ENCODE measurements at regions of chrX and their contacts with region 1.

Region 1: GRCh38 chrX:72572248-72573157 is at the start of gene HDAC8:
- DNase-seq: peak in 8 of 9 experiments; percentile 10 to 76 (median 46)
- ATAC-seq: peak; percentile 88
- H3K4me3 ChIP-seq: peak within 1 kb of the TSS; percentile 82 to 96
- H3K4me3 Mint-ChIP-seq: peak within 1 kb of the TSS; percentile 96
- H3K27ac ChIP-seq: peak within 1 kb of the TSS; percentile 41 to 69
- H3K27ac Mint-ChIP-seq: peak within 1 kb of the TSS; percentile 88
- H3K4me1 ChIP-seq: no peaks in the 10 kb centered on the region
- H3K4me1 Mint-ChIP-seq: peaks cover 11% of the 10 kb centered on the region
- H3K27me3 ChIP-seq: no peaks in the 10 kb centered on the region
- H3K27me3 Mint-ChIP-seq: no peaks in the 10 kb centered on the region
- CTCF ChIP-seq: no peak
- total RNA-seq, gene HDAC8: 5.7 to 6.8 TPM

Region 2: GRCh38 chrX:72269671-72270251 is 302.7 kb before region 1 on chrX:
- CTCF ChIA-PET with region 1: no interaction called
- POLR2A ChIA-PET with region 1: no interaction called
- intact Hi-C with region 1: loop called in 1 of 2 experiments (anchors 10 kb)
- DNase-seq: peak in 5 of 9 experiments; percentile 13 to 43 (median 20)
- ATAC-seq: peak; percentile 57
- H3K4me3 ChIP-seq: no peak overlapping the region
- H3K4me3 Mint-ChIP-seq: no peak overlapping the region
- H3K27ac ChIP-seq: no peak overlapping the region
- H3K27ac Mint-ChIP-seq: peak overlapping the region; percentile 69
- H3K4me1 ChIP-seq: peaks cover 12% of the 10 kb centered on the region
- H3K4me1 Mint-ChIP-seq: peaks cover 32% of the 10 kb centered on the region
- H3K27me3 ChIP-seq: no peaks in the 10 kb centered on the region
- H3K27me3 Mint-ChIP-seq: no peaks in the 10 kb centered on the region
- CTCF ChIP-seq: no peak

Region 3: DNA sequence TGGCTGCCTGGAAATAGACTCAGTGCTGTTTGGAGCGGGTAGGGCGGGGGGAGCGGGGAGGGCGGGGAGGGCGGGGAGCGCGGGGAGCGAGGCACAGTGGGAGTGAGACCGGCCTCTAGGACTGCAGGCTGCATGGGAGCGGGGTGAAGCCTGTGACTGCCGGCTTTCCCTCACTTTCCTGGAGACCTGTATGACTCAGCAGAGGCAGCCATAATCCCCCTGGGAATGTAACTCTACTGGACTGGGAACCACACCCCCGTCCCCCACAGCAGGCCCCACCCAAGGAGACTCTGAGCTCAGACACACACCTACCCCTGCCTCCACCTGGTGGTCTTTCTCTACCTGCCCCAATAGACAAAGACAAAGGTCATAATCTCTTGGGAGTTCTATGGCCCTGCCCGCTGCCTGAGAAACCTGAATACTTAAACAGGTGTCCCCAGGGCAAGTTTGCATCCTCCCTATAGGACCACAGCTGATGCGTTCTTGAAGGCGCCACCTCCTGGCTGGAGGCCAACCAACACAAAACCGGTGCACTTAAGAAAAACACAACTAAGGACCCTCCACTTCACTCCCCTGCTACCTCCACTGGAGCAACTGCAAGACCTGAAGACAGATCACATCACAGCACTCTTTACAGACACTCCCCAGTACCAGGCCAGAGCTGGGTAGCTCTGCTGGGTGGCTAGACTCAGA is 17.9 kb before region 1 on chrX:
- CTCF ChIA-PET with region 1: no interaction called
- POLR2A ChIA-PET with region 1: no interaction called
- intact Hi-C with region 1: no loop called
- DNase-seq: no peak
- ATAC-seq: no peak
- H3K4me3 ChIP-seq: no peak overlapping the region
- H3K4me3 Mint-ChIP-seq: no peak overlapping the region
- H3K27ac ChIP-seq: no peak overlapping the region
- H3K27ac Mint-ChIP-seq: no peak overlapping the region
- H3K4me1 ChIP-seq: no peaks in the 10 kb centered on the region
- H3K4me1 Mint-ChIP-seq: peaks cover 21% of the 10 kb centered on the region
- H3K27me3 ChIP-seq: no peaks in the 10 kb centered on the region
- H3K27me3 Mint-ChIP-seq: no peaks in the 10 kb centered on the region
- CTCF ChIP-seq: no peak

Region 4: GRCh38 chrX:73562984-73563737 is 990.7 kb after region 1 on chrX and contains the start of gene CHIC1:
- CTCF ChIA-PET with region 1: no interaction called
- POLR2A ChIA-PET with region 1: no interaction called
- intact Hi-C with region 1: loop called in 1 of 2 experiments (anchors 5 kb)
- DNase-seq: peak; percentile 46 to 88 (median 67)
- ATAC-seq: peak; percentile 69
- H3K4me3 ChIP-seq: peak within 1 kb of the TSS; percentile 71 to 74
- H3K4me3 Mint-ChIP-seq: peak within 1 kb of the TSS; percentile 97
- H3K27ac ChIP-seq: peak within 1 kb of the TSS; percentile 78 to 93
- H3K27ac Mint-ChIP-seq: peak within 1 kb of the TSS; percentile 99
- H3K4me1 ChIP-seq: peaks cover 9% of the 10 kb centered on the region
- H3K4me1 Mint-ChIP-seq: peaks cover 32% of the 10 kb centered on the region
- H3K27me3 ChIP-seq: no peaks in the 10 kb centered on the region
- H3K27me3 Mint-ChIP-seq: no peaks in the 10 kb centered on the region
- CTCF ChIP-seq: no peak
- total RNA-seq, gene CHIC1: 5.0 to 5.4 TPM